ENCODE measurements at regions of chr7 and their contacts with region 1.

Region 1: DNA sequence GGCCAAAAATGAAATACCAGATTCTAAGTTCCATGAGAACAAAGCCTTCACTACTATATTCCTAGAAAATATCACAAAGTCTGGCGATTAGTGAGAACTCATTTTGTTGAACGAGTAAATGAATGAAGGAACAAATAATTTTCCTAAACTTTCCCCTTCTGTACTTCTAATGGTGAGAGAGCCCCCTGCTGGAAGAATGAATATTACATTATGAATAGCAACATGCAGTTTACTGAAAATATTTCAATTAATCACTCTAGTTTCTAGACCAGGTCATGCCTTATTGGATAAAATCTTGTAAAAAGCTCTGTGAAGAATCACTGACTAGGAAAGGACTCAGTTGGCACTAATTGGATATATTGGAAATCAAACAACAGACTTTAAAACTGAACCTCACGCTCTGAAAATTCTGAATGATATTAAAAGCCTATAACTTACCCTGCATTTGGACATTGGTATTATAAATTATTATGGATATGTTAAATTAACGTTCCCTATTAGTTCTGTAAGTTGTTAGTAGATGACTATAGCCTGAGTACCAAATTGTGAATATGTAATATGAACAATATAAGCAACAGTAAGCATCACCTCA is 32.4 kb upstream of the MTPN start:
- DNase-seq: peak; percentile 23 to 50 (median 35)
- H3K4me3 ChIP-seq: no peak overlapping the region
- H3K4me3 Mint-ChIP-seq: no peak overlapping the region
- H3K27ac ChIP-seq: no peak overlapping the region
- H3K27ac Mint-ChIP-seq: no peak overlapping the region
- H3K4me1 ChIP-seq: no peaks in the 10 kb centered on the region
- H3K4me1 Mint-ChIP-seq: peaks cover 4% of the 10 kb centered on the region
- H3K27me3 ChIP-seq: peaks cover 3 to 7% of the 10 kb centered on the region in 2 donors
- H3K27me3 Mint-ChIP-seq: peaks cover 4 to 26% (median 9%) of the 10 kb centered on the region in 3 donors
- CTCF ChIP-seq: peak; percentile 92

Region 2: DNA sequence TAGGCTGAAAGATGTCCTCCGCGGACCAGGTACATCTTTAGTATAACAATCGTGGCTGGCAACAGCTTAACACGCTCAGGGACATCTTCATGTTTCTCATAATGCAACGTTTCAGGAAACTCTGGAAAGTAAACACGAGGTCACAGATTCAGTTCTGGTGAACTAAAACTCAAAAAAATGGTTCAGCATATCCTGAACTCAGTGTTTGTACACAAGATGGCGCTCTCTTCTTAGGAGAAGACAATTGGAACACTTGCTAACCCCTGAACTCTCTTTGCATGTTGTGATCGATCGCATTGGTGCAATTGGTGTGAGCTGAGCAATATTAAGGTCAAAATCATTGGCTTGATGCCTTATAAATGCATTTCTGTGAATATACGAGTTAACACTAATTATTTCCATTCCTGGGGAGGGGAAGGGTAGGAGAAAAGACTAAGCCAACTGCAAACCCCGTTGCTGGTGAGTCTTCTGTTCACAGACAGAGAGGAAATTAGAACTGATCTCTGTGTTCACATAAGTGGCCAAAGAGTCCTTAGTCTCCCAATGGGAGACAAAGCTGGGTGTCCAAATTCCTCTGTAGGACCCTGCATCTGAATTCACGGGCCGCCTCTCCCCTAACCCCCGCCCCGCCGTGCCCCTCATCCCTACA is 208.4 kb before region 1 on chr7:
- intact Hi-C with region 1: loop called (anchors 1 to 2 kb)
- DNase-seq: peak; percentile 24 to 58 (median 45)
- H3K4me3 ChIP-seq: no peak overlapping the region
- H3K4me3 Mint-ChIP-seq: peak overlapping the region in 1 of 2 donors; percentile 36
- H3K27ac ChIP-seq: no peak overlapping the region
- H3K27ac Mint-ChIP-seq: peak overlapping the region in 1 of 7 donors; percentile 16
- H3K4me1 ChIP-seq: no peaks in the 10 kb centered on the region
- H3K4me1 Mint-ChIP-seq: peaks cover 2% of the 10 kb centered on the region
- H3K27me3 ChIP-seq: no peaks in the 10 kb centered on the region
- H3K27me3 Mint-ChIP-seq: peaks cover 4% of the 10 kb centered on the region in 3 donors
- CTCF ChIP-seq: peak; percentile 76

Region 3: GRCh38 chr7:136049818-136050458 is 40.4 kb after region 1 on chr7:
- intact Hi-C with region 1: no loop called
- DNase-seq: no peak
- H3K4me3 ChIP-seq: no peak overlapping the region
- H3K4me3 Mint-ChIP-seq: no peak overlapping the region
- H3K27ac ChIP-seq: no peak overlapping the region
- H3K27ac Mint-ChIP-seq: no peak overlapping the region
- H3K4me1 ChIP-seq: no peaks in the 10 kb centered on the region
- H3K4me1 Mint-ChIP-seq: no peaks in the 10 kb centered on the region
- H3K27me3 ChIP-seq: no peaks in the 10 kb centered on the region
- H3K27me3 Mint-ChIP-seq: peaks cover 0 to 1% (median 0%) of the 10 kb centered on the region in 3 donors
- CTCF ChIP-seq: no peak

Measured in CD14-positive monocyte (primary cell).